Upper lobe of right lung (tissue), 1 donor: ENCODE measurements at regions of chr4 and their contacts with region 1.

Region 1: GRCh38 chr4:16289897-16290554 is 63.8 kb upstream of the TAPT1 start:
- DNase-seq: no peak
- ATAC-seq: peak; percentile 37
- H3K4me3 ChIP-seq: no peak overlapping the region
- H3K27ac ChIP-seq: no peak overlapping the region
- H3K4me1 ChIP-seq: peaks cover 9% of the 10 kb centered on the region
- H3K27me3 ChIP-seq: no peaks in the 10 kb centered on the region
- CTCF ChIP-seq: peak; percentile 71

Region 2: GRCh38 chr4:16116493-16116990 is 173.5 kb before region 1 on chr4:
- intact Hi-C with region 1: no loop called
- DNase-seq: no peak
- ATAC-seq: no peak
- H3K4me3 ChIP-seq: no peak overlapping the region
- H3K27ac ChIP-seq: no peak overlapping the region
- H3K4me1 ChIP-seq: no peaks in the 10 kb centered on the region
- H3K27me3 ChIP-seq: no peaks in the 10 kb centered on the region
- CTCF ChIP-seq: no peak

Region 3: DNA sequence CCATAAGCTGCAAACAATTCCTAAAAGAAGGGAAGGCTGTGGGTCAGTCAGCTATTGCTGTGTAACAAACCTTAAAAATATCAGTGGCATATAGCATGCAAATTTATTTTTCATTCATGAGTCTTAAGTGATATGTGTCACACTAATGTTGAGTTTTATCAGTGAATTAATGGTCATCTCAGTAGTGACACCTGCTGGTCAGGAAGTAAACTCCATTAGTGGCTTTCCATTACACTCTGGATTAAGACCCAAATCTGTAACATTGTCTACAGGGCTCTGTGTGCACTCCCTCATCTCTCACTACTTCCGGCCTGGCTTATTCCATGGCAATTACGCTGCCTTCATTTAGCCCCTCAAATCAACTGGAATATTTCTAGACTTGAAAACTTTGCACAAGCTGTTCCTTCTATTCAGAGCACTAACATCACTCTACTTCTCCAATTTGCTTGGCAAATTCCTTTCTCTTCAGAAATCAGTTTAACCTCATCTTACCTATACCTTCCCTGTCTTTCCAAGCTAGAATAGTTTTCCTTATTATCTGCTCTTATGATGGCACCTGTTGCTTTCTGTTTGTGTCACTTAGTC is 153.6 kb after region 1 on chr4:
- intact Hi-C with region 1: loop called (anchors 10 kb)
- DNase-seq: no peak
- ATAC-seq: peak; percentile 84
- H3K4me3 ChIP-seq: no peak overlapping the region
- H3K27ac ChIP-seq: no peak overlapping the region
- H3K4me1 ChIP-seq: no peaks in the 10 kb centered on the region
- H3K27me3 ChIP-seq: no peaks in the 10 kb centered on the region
- CTCF ChIP-seq: peak; percentile 77

Region 4: GRCh38 chr4:16457944-16458343 is 167.9 kb after region 1 on chr4:
- intact Hi-C with region 1: no loop called
- DNase-seq: no peak
- ATAC-seq: no peak
- H3K4me3 ChIP-seq: no peak overlapping the region
- H3K27ac ChIP-seq: no peak overlapping the region
- H3K4me1 ChIP-seq: no peaks in the 10 kb centered on the region
- H3K27me3 ChIP-seq: peaks cover 5% of the 10 kb centered on the region
- CTCF ChIP-seq: no peak